Mammary epithelial cell (primary cell): ENCODE measurements at regions of chr1 and their contacts with region 1.

Region 1: DNA sequence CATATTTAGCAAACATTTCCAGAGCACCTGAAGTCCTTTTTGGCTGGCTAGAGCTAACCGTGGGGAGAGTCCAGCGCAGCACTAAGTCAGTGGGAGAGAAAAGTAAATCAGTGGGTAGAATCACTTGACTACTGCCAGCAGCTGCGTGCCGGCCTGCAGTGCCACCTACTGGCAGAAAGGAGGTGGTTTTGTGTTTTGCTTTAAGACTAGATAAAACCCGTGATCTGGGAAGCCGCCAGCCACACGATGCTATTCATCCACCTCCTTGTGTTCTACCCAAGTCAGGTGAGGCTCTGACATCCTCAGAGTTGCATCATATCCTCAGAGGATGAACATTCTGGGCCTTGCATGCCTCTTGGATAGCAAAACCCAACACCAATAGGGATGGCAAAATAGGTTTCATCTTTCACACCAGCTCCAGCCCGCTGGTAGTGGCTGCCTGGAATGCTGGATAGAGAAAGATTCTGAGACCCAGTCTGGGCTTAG is 14.1 kb upstream of the HEYL start:
- DNase-seq: peak; percentile 81
- H3K4me3 ChIP-seq: no peak overlapping the region
- H3K27ac ChIP-seq: no peak overlapping the region
- H3K4me1 ChIP-seq: no peaks in the 10 kb centered on the region
- H3K27me3 ChIP-seq: no peaks in the 10 kb centered on the region
- CTCF ChIP-seq: peak; percentile 80 to 92

Region 2: GRCh38 chr1:39305555-39305954 is 348.0 kb before region 1 on chr1:
- CTCF ChIA-PET with region 1: no interaction called
- dilution Hi-C with region 1: no loop called
- in situ Hi-C with region 1: no loop called
- intact Hi-C with region 1: no loop called
- DNase-seq: no peak
- H3K4me3 ChIP-seq: no peak overlapping the region
- H3K27ac ChIP-seq: no peak overlapping the region
- H3K4me1 ChIP-seq: no peaks in the 10 kb centered on the region
- H3K27me3 ChIP-seq: no peaks in the 10 kb centered on the region
- CTCF ChIP-seq: no peak

Region 3: DNA sequence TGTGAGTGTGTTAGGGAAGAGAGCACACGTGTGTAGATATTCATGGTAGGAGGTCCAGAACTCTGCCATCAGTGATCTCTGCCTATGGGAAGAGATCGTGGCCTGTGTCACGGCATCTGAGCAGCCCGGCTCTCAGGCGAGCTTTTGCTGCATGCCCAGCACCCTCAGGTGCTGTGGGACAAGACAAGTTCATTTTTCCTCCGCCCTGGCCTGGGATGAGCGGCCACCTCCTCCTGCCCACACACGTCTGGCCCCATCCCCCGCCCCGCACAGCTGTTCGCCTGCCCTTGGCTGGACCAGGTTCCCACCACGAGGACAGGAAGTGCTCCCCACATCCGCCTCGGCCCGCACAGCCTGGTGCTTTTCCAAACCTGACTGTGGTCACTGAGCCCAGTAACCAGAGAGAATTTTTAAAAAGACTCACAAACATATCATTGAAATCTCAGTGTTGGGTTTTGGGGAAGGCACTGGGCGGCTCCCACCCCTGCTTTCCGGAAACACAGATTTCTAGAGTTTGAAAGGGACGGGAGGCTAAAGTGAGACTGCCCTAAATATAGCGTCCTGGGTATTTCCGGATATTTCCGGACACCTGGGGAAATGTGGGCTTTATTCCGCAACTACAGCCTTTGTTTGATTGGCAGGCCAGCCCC is 144.1 kb before region 1 on chr1:
- CTCF ChIA-PET with region 1: no interaction called
- dilution Hi-C with region 1: no loop called
- in situ Hi-C with region 1: no loop called
- intact Hi-C with region 1: no loop called
- DNase-seq: peak; percentile 66
- H3K4me3 ChIP-seq: no peak overlapping the region
- H3K27ac ChIP-seq: no peak overlapping the region
- H3K4me1 ChIP-seq: peaks cover 9% of the 10 kb centered on the region
- H3K27me3 ChIP-seq: no peaks in the 10 kb centered on the region
- CTCF ChIP-seq: no peak

Region 4: GRCh38 chr1:39564340-39564739 is 89.2 kb before region 1 on chr1:
- CTCF ChIA-PET with region 1: no interaction called
- dilution Hi-C with region 1: no loop called
- in situ Hi-C with region 1: no loop called
- intact Hi-C with region 1: loop called (anchors 5 kb)
- DNase-seq: no peak
- H3K4me3 ChIP-seq: no peak overlapping the region
- H3K27ac ChIP-seq: no peak overlapping the region
- H3K4me1 ChIP-seq: no peaks in the 10 kb centered on the region
- H3K27me3 ChIP-seq: no peaks in the 10 kb centered on the region
- CTCF ChIP-seq: no peak

Region 5: DNA sequence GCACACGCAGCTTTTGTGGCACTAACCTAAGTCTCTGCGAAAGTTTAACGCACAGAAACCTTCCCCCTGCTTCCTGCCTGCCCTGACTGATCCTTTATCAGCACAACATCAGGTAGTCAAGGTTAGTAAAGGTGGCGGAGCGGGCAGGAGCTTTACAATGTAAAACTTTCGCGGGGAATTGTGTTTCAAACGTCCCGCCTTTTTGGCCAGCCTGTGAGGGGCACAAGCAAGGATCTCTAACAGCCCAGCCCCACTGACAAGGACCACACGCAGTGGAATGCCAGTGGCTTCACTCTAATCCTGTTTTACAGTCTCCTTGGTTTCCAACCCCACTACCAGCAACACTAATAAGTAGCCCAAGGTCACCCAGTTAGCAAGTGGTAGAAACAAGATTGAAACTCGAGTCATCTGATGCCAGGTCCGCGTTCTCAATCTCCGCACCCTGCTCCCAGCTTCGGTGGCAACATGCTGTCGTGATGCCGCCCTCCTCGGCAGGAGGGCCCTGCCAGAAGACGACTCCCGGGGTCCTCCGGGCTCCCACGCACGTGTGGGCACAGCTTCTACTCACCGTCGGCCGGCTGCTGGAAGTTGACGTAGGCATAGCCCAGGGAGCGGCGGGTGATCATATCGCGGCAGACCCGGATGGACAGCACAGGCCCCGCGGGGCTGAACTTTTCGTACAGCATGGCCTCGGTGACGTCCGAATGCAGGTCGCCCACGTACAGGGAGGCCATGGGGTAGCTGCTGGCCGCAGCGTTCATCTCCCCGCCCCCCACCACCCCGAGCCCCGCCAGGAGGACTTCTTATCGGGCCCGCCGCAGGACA is 78.2 kb before region 1 on chr1:
- CTCF ChIA-PET with region 1: no interaction called
- dilution Hi-C with region 1: no loop called
- in situ Hi-C with region 1: no loop called
- intact Hi-C with region 1: loop called (anchors 2 kb)
- DNase-seq: peak; percentile 41
- H3K4me3 ChIP-seq: peak overlapping the region; percentile 71 to 99 (median 90)
- H3K27ac ChIP-seq: peak overlapping the region; percentile 74
- H3K4me1 ChIP-seq: peaks cover 18% of the 10 kb centered on the region
- H3K27me3 ChIP-seq: no peaks in the 10 kb centered on the region
- CTCF ChIP-seq: no peak

Region 6: DNA sequence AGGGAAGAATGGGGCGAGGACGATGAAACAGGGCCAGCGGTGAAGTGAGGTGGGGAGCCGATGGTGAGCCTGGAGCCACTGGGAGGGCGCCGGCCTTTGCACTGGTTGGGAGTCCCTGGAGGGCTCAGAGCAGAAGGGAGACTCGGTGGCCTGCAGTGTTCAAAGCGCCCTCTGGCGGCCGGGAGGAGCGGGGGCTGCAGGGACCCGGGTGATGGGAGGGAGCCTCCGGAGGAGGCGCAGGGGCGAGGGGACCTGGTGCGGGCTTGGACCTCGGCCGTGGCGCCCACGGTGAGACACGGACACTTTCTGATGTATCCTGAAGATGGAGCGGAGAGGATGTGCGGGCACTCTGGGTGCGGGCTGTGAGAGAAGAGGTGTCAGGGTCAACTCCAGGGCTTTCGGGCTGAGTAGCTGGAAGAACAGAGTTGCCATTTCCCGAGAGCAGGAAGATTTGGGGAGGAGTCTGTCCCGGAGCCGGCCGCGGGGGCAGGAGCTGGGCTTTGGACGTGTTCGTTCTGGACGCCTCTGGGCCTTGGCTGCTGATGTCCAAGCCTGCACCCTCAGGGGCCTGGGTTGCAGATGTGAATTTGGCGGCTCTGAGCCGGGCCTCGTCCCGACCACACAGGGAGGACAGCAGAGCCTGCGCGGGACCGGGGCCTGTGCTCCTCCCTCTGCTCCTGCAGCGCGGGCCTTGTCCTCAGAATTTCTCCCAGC is 43.8 kb before region 1 on chr1:
- CTCF ChIA-PET with region 1: interaction called, 14 read pairs
- dilution Hi-C with region 1: no loop called
- in situ Hi-C with region 1: loop called in 1 of 2 experiments (anchors 5 kb)
- intact Hi-C with region 1: loop called (anchors 1 kb)
- DNase-seq: peak; percentile 15
- H3K4me3 ChIP-seq: no peak overlapping the region
- H3K27ac ChIP-seq: no peak overlapping the region
- H3K4me1 ChIP-seq: peaks cover 4% of the 10 kb centered on the region
- H3K27me3 ChIP-seq: no peaks in the 10 kb centered on the region
- CTCF ChIP-seq: peak; percentile 59 to 64

Region 7: DNA sequence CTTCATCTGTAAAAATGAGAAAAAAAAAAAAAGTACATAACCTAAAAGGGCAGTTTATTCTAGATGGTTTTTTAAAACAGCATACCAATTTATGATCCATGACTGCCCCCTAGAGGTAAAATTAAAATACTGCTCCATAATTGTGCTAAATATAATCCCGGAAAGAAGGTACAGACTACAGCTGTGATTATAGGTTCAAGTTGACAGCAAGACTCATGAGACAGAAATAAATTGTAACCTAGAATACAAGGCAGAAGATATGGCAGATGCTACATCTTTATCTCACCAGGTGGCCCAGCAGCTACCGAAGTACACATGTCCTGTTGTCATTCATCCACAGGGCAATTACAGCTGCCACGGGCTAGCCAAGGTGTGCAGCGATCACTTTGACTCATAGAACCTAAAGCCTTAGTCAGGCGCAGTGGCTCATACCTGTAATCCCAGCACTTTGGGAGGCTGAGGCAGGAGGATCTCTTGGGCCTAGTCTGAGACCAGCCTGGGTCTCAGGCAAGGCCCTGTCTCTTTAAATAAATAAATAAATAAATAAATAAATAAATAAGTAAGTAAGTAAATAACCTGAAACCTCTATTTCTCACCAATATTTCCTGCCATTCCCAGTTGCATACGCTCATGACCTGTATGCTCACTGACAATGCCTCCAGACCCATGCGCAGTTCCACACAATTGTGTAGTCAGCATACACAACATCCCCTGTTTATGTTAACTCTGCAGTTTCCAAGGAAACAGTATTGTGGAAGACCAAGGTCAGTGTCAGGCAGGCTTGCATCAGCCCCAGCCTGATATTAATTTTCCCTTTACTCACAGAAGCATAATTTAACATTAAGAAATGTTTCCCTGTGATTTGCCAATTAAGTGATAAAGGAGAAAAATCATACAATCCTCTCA is 66.8 kb after region 1 on chr1:
- CTCF ChIA-PET with region 1: no interaction called
- dilution Hi-C with region 1: no loop called
- in situ Hi-C with region 1: no loop called
- intact Hi-C with region 1: loop called (anchors 5 kb)
- DNase-seq: peak; percentile 44
- H3K4me3 ChIP-seq: no peak overlapping the region
- H3K27ac ChIP-seq: no peak overlapping the region
- H3K4me1 ChIP-seq: peaks cover 2% of the 10 kb centered on the region
- H3K27me3 ChIP-seq: no peaks in the 10 kb centered on the region
- CTCF ChIP-seq: peak; percentile 56 to 66

Region 8: DNA sequence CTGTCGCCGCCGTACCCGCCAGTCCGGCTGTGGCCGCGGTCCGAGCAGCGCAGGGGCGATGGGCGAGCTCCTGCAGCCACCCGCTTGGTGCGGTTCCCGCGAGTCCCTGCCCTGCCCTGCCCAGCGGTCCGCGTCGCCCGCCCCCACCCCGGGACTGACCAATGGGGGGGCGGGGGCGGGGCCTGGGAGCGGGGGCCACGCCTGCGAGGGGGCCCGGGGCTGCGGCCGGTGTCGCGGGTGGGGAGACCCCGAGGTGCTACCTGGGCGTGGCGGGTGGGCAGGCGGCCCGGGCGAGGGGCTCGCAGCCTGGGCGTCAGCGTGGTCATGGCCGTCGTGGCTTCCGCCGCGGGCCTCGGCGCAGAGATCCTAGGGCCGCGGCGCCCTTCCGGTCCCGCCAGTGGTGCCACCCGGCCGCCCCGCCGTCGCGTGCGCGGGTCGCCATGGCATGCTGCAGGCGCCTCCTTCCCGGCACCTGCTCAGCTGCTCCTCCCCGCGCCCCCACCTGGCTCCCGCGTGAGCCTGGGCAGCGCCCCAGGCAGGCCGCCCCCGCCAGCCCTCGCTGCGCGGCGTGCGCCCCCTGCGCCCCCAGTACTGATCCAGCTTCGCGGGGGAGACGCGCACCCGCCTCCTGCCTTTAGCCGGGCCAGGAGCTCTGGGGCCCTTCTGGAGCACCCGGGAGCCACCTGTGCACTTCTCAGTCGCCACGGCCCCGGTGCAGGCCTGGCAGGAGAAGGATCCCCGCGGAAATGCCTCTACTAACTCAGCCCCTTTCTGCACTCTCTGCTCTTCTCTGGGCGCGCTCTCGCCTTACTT is 135.4 kb after region 1 on chr1 and contains the start of gene BMP8B:
- CTCF ChIA-PET with region 1: interaction called, 12 read pairs
- dilution Hi-C with region 1: no loop called
- in situ Hi-C with region 1: no loop called
- intact Hi-C with region 1: no loop called
- DNase-seq: peak; percentile 21
- H3K4me3 ChIP-seq: peak within 1 kb of the TSS in 2 of 3 experiments; percentile 45
- H3K27ac ChIP-seq: no peak within 1 kb of the TSS
- H3K4me1 ChIP-seq: peaks cover 10% of the 10 kb centered on the region
- H3K27me3 ChIP-seq: peaks cover 10% of the 10 kb centered on the region
- CTCF ChIP-seq: no peak
- total RNA-seq, gene BMP8B: not detected